Esophagus muscularis mucosa (tissue), 4 donors: ENCODE measurements at regions of chr1 and their contacts with region 1.

Region 1: GRCh38 chr1:234743791-234744611 is 134.0 kb upstream of the IRF2BP2 start:
- DNase-seq: no peak
- H3K4me3 ChIP-seq: peak overlapping the region; percentile 1 to 24 (median 20)
- H3K27ac ChIP-seq: peak overlapping the region; percentile 53 to 68 (median 61)
- H3K4me1 ChIP-seq: peaks cover 4 to 36% (median 23%) of the 10 kb centered on the region in 4 donors
- H3K27me3 ChIP-seq: no peaks in the 10 kb centered on the region
- CTCF ChIP-seq: peak in 1 of 3 experiments; percentile 22
- EP300 ChIP-seq: no peak
- POLR2A ChIP-seq: no peak

Region 2: GRCh38 chr1:234656856-234657654 is 86.9 kb before region 1 on chr1:
- intact Hi-C with region 1: no loop called
- DNase-seq: peak; percentile 53
- H3K4me3 ChIP-seq: no peak overlapping the region
- H3K27ac ChIP-seq: peak overlapping the region in 1 of 4 donors; percentile 10
- H3K4me1 ChIP-seq: no peaks in the 10 kb centered on the region
- H3K27me3 ChIP-seq: no peaks in the 10 kb centered on the region
- CTCF ChIP-seq: no peak
- EP300 ChIP-seq: no peak
- POLR2A ChIP-seq: no peak

Region 3: GRCh38 chr1:235050911-235051360 is 306.9 kb after region 1 on chr1:
- intact Hi-C with region 1: loop called (anchors 10 kb)
- DNase-seq: no peak
- H3K4me3 ChIP-seq: no peak overlapping the region
- H3K27ac ChIP-seq: no peak overlapping the region
- H3K4me1 ChIP-seq: peaks cover 21 to 42% (median 35%) of the 10 kb centered on the region in 4 donors
- H3K27me3 ChIP-seq: no peaks in the 10 kb centered on the region
- CTCF ChIP-seq: no peak
- EP300 ChIP-seq: no peak
- POLR2A ChIP-seq: no peak